ENCODE measurements at regions of chr2 and their contacts with region 1.

Region 1: GRCh38 chr2:205034034-205034433 is 488.8 kb downstream of the PARD3B start:
- DNase-seq: no peak
- H3K4me3 ChIP-seq: no peak overlapping the region
- H3K27ac ChIP-seq: no peak overlapping the region
- H3K27me3 ChIP-seq: no peaks in the 10 kb centered on the region
- CTCF ChIP-seq: no peak

Region 2: GRCh38 chr2:204900910-204901309 is 133.1 kb before region 1 on chr2:
- CTCF ChIA-PET with region 1: no interaction called
- POLR2A ChIA-PET with region 1: no interaction called
- DNase-seq: no peak
- H3K4me3 ChIP-seq: no peak overlapping the region
- H3K27ac ChIP-seq: no peak overlapping the region
- H3K27me3 ChIP-seq: no peaks in the 10 kb centered on the region
- CTCF ChIP-seq: no peak

Region 3: DNA sequence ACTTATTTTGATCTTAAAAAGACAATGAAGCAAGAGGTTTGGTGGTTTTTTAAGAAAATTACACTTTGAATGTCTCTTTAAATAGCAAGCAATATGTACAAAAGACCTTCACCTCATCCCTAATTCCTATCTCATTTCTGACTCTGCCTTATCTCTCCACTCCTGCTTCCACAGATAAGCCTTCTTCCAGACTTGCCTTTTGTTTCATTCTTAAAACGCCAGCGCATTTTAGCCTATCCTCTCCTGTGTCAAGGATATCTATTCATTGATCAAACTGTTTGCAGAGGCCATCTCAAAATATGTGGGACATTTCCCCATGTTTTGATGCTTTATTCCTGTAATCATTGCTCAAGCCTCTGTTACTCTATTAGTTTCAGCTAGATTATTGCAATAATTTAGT is 73.8 kb after region 1 on chr2:
- CTCF ChIA-PET with region 1: interaction called, 11 read pairs
- POLR2A ChIA-PET with region 1: no interaction called
- DNase-seq: no peak
- H3K4me3 ChIP-seq: no peak overlapping the region
- H3K27ac ChIP-seq: no peak overlapping the region
- H3K27me3 ChIP-seq: no peaks in the 10 kb centered on the region
- CTCF ChIP-seq: no peak

Region 4: DNA sequence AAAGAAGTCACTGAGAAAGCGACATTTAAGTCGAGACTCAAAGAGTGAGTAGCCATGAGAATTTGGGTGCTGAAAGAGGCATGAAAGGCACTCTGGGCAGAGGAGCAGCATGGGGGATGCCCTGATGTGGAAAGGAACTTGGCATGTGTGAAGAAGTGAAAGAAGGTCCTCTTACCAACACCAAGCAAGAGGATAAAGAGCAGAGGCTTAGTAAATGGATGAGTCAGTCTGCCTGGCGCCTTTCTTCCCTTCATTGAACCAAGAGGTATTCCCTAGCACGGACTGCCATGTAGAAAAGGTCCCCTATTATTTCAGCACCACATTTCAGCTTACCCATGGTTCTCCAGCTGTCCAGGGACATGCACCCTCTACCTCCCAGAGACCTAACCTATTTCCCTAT is 427.1 kb after region 1 on chr2:
- CTCF ChIA-PET with region 1: no interaction called
- POLR2A ChIA-PET with region 1: no interaction called
- DNase-seq: no peak
- H3K4me3 ChIP-seq: no peak overlapping the region
- H3K27ac ChIP-seq: no peak overlapping the region
- H3K27me3 ChIP-seq: no peaks in the 10 kb centered on the region
- CTCF ChIP-seq: no peak